MCF 10A (cell line): ENCODE measurements at regions of chr14 and their contacts with region 1.

Region 1: GRCh38 chr14:35883677-35884293 is 57.6 kb downstream of the BRMS1L start:
- DNase-seq: peak; percentile 41
- H3K4me3 Mint-ChIP-seq: no peak overlapping the region
- H3K27ac Mint-ChIP-seq: no peak overlapping the region
- H3K4me1 Mint-ChIP-seq: peaks cover 14% of the 10 kb centered on the region
- H3K27me3 Mint-ChIP-seq: no peaks in the 10 kb centered on the region
- CTCF ChIP-seq: peak; percentile 66

Region 2: GRCh38 chr14:35898217-35898775 is 14.5 kb after region 1 on chr14:
- CTCF ChIA-PET with region 1: interaction called, 12 read pairs
- POLR2A ChIA-PET with region 1: no interaction called
- intact Hi-C with region 1: no loop called
- DNase-seq: no peak
- H3K4me3 Mint-ChIP-seq: no peak overlapping the region
- H3K27ac Mint-ChIP-seq: no peak overlapping the region
- H3K4me1 Mint-ChIP-seq: no peaks in the 10 kb centered on the region
- H3K27me3 Mint-ChIP-seq: no peaks in the 10 kb centered on the region
- CTCF ChIP-seq: no peak

Region 3: DNA sequence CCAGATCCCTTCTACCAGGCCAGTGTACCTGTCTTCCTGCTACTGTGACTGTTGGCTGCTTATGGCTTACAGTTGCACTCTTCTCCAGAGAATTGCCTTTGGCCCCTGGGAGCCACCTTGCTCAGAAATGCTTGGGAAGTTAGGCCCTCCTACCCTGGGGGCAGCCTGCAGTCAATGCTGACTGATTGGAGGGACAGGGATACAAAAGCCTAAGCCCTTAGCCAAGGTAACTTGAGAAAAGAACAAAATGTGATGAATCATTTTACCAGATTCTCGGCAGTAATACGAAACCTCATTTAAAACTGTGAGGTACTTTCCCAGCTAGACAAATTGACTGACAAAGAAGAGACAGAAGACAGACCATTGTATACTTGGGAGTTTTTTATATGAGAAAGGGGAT is 245.4 kb after region 1 on chr14:
- CTCF ChIA-PET with region 1: no interaction called
- POLR2A ChIA-PET with region 1: no interaction called
- intact Hi-C with region 1: no loop called
- DNase-seq: peak; percentile 77
- H3K4me3 Mint-ChIP-seq: peak overlapping the region; percentile 23
- H3K27ac Mint-ChIP-seq: peak overlapping the region; percentile 87
- H3K4me1 Mint-ChIP-seq: peaks cover 16% of the 10 kb centered on the region
- H3K27me3 Mint-ChIP-seq: no peaks in the 10 kb centered on the region
- CTCF ChIP-seq: no peak

Region 4: DNA sequence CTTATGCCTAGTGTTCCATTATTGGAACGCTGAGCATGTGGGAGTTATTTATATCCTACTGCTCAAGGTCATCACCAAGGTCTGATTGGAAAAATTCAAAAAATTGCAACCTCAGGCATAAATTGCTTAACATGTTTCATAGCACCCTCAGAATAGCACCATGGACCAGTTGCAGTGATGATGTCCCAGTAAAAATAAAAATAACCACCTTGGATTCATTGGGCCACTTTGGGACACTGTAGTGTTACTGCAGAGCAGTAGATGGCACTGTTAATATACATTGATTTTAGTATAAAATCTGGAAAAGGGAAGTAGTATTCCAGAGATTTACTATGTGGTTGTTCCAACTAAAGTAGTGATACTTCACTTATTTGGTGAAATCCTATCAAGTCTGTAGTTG is 323.7 kb after region 1 on chr14:
- CTCF ChIA-PET with region 1: no interaction called
- POLR2A ChIA-PET with region 1: no interaction called
- intact Hi-C with region 1: loop called (anchors 10 kb)
- DNase-seq: peak; percentile 22
- H3K4me3 Mint-ChIP-seq: no peak overlapping the region
- H3K27ac Mint-ChIP-seq: no peak overlapping the region
- H3K4me1 Mint-ChIP-seq: no peaks in the 10 kb centered on the region
- H3K27me3 Mint-ChIP-seq: no peaks in the 10 kb centered on the region
- CTCF ChIP-seq: peak; percentile 48